ENCODE measurements at regions of chr15 and their contacts with region 1.

Region 1: GRCh38 chr15:80776420-80777045 is 2.6 kb upstream of the CEMIP start:
- DNase-seq: peak; percentile 76
- H3K4me3 ChIP-seq: peak overlapping the region in 1 of 2 experiments; percentile 13; a peak in 1 of 4 replicates
- H3K27ac ChIP-seq: peak overlapping the region in 1 of 2 experiments; percentile 72; a peak in 2 of 4 replicates
- H3K4me1 ChIP-seq: peaks cover 0 to 27% of the 10 kb centered on the region in 2 experiments; a peak in 3 of 4 replicates
- H3K27me3 ChIP-seq: no peaks in the 10 kb centered on the region
- CTCF ChIP-seq: peak; percentile 88
- EP300 ChIP-seq: no peak
- RAD21 ChIP-seq: peak; percentile 90

Region 2: GRCh38 chr15:80455668-80456442 is 320.7 kb before region 1 on chr15:
- CTCF ChIA-PET with region 1: interaction called, 185 read pairs
- POLR2A ChIA-PET with region 1: no interaction called
- DNase-seq: peak; percentile 75
- H3K4me3 ChIP-seq: peak overlapping the region in 1 of 2 experiments; percentile 20; a peak in 1 of 4 replicates
- H3K27ac ChIP-seq: peak overlapping the region; percentile 49 to 69; a peak in 3 of 4 replicates
- H3K4me1 ChIP-seq: peaks cover 13 to 16% of the 10 kb centered on the region in 2 experiments; a peak in 3 of 4 replicates
- H3K27me3 ChIP-seq: no peaks in the 10 kb centered on the region
- CTCF ChIP-seq: peak; percentile 98
- EP300 ChIP-seq: peak; percentile 66 to 94
- RAD21 ChIP-seq: peak; percentile 96

Region 3: DNA sequence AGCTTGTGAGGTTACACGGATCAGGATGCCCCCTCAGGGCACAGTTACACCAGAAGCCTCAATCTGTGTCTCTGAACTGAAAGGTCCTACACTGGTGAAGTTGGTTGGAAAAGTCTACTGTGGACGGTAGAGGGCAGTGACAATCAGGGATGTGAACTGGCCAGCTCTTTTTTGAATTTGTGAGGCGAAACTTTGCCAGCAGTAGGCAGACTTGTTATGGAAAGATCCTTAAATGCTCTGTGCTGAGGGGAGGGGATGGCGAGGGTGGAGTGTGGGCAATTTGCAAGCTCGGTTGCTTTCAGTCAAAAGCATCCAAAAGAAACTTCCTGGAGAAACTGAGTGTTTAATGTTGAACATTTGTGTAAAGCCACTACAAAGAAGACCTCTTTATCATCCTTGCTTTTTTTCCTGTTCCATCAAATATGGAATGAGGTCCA is 208.8 kb before region 1 on chr15:
- CTCF ChIA-PET with region 1: interaction called, 253 read pairs
- POLR2A ChIA-PET with region 1: interaction called, 4 read pairs
- DNase-seq: peak; percentile 80
- H3K4me3 ChIP-seq: no peak overlapping the region; a peak in 1 of 4 replicates
- H3K27ac ChIP-seq: 0 out of 4 replicates have a peak overlapping the region, but pooled peaks of 1 of the 2 experiments have one; percentile 7
- H3K4me1 ChIP-seq: peaks cover 0 to 4% of the 10 kb centered on the region in 2 experiments; a peak in 1 of 4 replicates
- H3K27me3 ChIP-seq: no peaks in the 10 kb centered on the region
- CTCF ChIP-seq: peak; percentile 87
- EP300 ChIP-seq: no peak
- RAD21 ChIP-seq: peak; percentile 97

Region 4: DNA sequence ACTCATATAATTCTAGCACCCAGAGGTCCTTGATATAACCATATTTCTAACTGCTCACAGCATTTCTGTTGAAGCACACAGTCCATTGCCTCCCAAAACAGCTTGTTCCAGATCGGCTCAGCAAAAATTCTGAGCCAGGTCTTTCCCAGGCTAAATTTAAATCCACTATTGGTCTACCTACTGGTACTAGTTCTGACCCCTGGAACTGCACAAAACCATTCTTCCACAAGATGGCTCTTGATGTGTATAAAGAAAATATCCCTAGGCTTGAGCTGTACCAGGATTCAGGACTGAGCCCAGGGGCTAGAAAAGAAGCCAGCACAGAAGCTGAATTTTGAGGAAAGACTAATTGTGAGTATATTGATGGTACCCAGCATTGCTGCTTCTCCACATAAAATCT is 156.9 kb before region 1 on chr15:
- CTCF ChIA-PET with region 1: interaction called, 31 read pairs
- POLR2A ChIA-PET with region 1: no interaction called
- DNase-seq: no peak
- H3K4me3 ChIP-seq: no peak overlapping the region
- H3K27ac ChIP-seq: peak overlapping the region in 1 of 2 experiments; percentile 35; a peak in 1 of 4 replicates
- H3K4me1 ChIP-seq: peaks cover 12 to 26% of the 10 kb centered on the region in 2 experiments; a peak in 3 of 4 replicates
- H3K27me3 ChIP-seq: no peaks in the 10 kb centered on the region
- CTCF ChIP-seq: peak; percentile 45; the same call in 1 of the 2 replicates
- EP300 ChIP-seq: no peak
- RAD21 ChIP-seq: peak; percentile 49

Region 5: DNA sequence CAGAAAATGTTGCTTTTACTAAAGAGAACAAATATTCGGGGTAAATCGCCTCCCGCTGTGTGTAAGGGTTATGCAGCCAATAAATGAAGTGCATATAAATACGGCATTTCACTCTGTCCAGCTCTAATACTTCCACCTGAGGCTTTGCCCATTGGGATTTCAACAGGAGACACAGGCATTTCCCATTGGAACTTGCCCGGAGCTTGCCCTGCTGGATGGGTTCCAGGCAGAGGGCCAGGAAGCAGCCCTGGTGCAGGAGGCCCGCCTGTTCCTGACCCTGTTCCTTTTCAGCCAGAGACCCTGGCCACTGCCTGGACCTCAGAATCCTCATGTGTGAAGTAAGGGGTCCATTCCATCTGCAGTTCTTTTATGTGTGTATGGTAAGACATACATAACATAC is 14.8 kb before region 1 on chr15:
- CTCF ChIA-PET with region 1: interaction called, 24 read pairs
- POLR2A ChIA-PET with region 1: no interaction called
- DNase-seq: no peak
- H3K4me3 ChIP-seq: no peak overlapping the region
- H3K27ac ChIP-seq: no peak overlapping the region
- H3K4me1 ChIP-seq: no peaks in the 10 kb centered on the region
- H3K27me3 ChIP-seq: no peaks in the 10 kb centered on the region
- CTCF ChIP-seq: no peak
- EP300 ChIP-seq: no peak
- RAD21 ChIP-seq: no peak

Region 6: DNA sequence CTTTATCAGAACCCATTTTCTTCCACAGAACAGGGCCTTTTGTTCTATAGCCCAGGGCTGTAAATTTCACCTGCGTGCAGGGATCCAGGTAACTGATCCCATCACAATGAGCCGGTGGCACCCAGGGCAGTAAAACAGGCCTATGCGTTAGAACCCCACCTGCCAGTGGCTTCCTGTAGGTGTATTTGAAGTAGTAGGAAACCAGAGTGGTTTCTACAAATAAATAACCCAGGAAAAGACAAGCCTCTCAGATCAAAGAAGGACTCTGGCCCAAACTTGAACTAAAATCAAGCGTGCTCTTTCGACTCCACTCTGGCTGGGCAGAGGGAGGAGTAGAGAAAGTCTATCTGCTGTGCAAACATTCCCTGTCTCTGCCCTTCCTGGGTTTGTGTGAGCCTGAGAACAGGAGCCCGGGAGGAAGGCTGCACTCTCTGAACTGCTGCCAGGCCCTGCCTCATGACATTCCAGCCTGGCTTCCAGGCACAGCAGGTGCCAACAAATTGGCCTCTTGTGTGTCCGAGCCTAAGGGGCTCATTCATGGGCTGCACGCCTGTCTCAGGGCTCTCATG is 80.4 kb after region 1 on chr15:
- CTCF ChIA-PET with region 1: interaction called, 24 read pairs
- POLR2A ChIA-PET with region 1: no interaction called
- DNase-seq: no peak
- H3K4me3 ChIP-seq: no peak overlapping the region
- H3K27ac ChIP-seq: no peak overlapping the region
- H3K4me1 ChIP-seq: peaks cover 0 to 7% of the 10 kb centered on the region in 2 experiments; a peak in 1 of 4 replicates
- H3K27me3 ChIP-seq: no peaks in the 10 kb centered on the region
- CTCF ChIP-seq: no peak
- EP300 ChIP-seq: no peak
- RAD21 ChIP-seq: no peak

Region 7: DNA sequence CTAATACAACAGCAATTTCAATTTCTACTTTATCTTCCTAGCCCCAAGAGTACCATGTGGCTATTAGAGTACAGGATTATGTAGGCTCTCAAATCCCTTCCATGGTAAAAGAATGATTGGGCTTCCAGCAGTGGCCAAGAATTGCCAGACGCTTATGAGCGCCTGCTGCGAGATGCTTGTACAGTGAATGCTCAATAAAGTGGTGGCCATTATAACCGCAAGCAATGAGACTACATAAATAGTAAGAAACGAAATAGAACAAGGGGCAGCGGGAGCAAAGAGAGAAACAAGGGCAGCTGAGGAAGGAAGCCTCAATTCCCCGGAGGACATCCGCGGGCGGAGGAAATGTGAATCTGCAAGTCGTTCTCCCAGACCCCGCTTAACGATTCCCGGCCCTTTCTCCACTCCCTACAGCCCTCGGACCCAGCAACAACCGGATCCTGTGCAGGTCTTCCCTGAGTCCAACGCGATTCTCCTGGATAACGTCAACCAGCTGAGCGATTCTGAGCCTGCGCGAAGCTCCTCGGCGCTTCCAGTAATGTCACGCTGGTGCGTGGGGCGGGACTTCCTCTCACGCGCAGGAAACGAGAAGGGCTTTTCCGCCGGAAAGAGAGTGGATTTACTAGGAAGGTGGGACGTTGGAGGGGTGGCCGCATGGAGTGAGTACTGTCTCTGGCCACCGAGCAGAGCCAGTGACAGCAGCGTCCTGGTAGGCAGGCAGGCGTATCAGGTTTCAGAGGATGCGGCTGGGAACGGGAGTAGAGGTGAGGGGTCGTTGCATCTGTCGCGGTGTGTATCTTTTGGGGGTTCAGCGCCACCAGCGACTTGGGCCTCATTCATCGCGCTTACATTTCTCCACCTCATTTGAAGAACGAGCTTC is 1973.7 kb after region 1 on chr15:
- CTCF ChIA-PET with region 1: no interaction called
- POLR2A ChIA-PET with region 1: no interaction called
- DNase-seq: peak; percentile 88
- H3K4me3 ChIP-seq: peak overlapping the region; percentile 83 to 84
- H3K27ac ChIP-seq: peak overlapping the region; percentile 79 to 93
- H3K4me1 ChIP-seq: peaks cover 3 to 6% of the 10 kb centered on the region in 2 experiments; a peak in 2 of 4 replicates
- H3K27me3 ChIP-seq: no peaks in the 10 kb centered on the region
- CTCF ChIP-seq: no peak
- EP300 ChIP-seq: peak in 1 of 2 experiments; percentile 80; a peak in 2 of 4 replicates
- RAD21 ChIP-seq: no peak